ENCODE measurements at regions of chr12 and their contacts with region 1.

Region 1: GRCh38 chr12:10235761-10236631 is 23.3 kb downstream of the GABARAPL1 start:
- DNase-seq: no peak
- H3K4me3 Mint-ChIP-seq: no peak overlapping the region
- H3K27ac Mint-ChIP-seq: no peak overlapping the region
- H3K4me1 Mint-ChIP-seq: peaks cover 11% of the 10 kb centered on the region
- H3K27me3 Mint-ChIP-seq: peaks cover 9% of the 10 kb centered on the region

Region 2: GRCh38 chr12:10364815-10365622 is 129.0 kb after region 1 on chr12:
- intact Hi-C with region 1: loop called (anchors 5 kb)
- DNase-seq: peak; percentile 51
- H3K4me3 Mint-ChIP-seq: no peak overlapping the region
- H3K27ac Mint-ChIP-seq: no peak overlapping the region
- H3K4me1 Mint-ChIP-seq: peaks cover 9% of the 10 kb centered on the region
- H3K27me3 Mint-ChIP-seq: peaks cover 27% of the 10 kb centered on the region

Region 3: DNA sequence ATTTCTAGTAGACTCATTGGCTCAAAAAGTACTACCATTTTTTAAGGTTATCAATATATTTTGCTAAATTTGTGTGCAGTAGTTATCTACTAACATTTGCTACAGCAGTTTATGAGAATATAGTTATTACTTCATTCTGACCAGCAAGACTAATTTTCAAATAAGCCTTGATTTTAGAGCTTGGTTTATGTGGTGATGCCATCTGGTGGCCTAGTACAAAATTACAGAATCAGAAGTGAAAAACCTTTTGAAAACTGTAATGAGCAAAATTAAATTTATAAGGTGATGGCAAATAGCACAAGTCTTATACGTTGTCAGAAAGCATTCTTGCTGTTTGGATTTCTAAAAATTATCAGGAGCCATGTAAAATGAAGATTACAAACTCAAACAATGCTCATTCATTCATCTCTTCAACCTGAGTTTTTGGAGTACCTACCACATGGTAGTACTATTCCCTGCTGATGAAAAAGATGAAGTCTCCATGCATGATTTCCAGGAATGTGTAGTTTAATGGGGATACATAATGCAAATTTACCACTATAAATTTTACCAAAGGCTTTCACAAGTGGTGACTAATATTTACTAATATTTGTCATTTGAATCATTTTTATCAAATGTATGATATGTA is 326.4 kb after region 1 on chr12:
- intact Hi-C with region 1: loop called (anchors 1 kb)
- DNase-seq: no peak
- H3K4me3 Mint-ChIP-seq: no peak overlapping the region
- H3K27ac Mint-ChIP-seq: no peak overlapping the region
- H3K4me1 Mint-ChIP-seq: no peaks in the 10 kb centered on the region
- H3K27me3 Mint-ChIP-seq: peaks cover 39% of the 10 kb centered on the region

Region 4: GRCh38 chr12:10673660-10674384 is 437.8 kb after region 1 on chr12 and contains the start of gene STYK1:
- intact Hi-C with region 1: loop called (anchors 2 kb)
- DNase-seq: peak; percentile 71
- H3K4me3 Mint-ChIP-seq: peak within 1 kb of the TSS; percentile 70
- H3K27ac Mint-ChIP-seq: no peak within 1 kb of the TSS
- H3K4me1 Mint-ChIP-seq: peaks cover 39% of the 10 kb centered on the region
- H3K27me3 Mint-ChIP-seq: peaks cover 67% of the 10 kb centered on the region
- total RNA-seq, gene STYK1: not detected in 2 replicates

Region 5: GRCh38 chr12:10749700-10750384 is 513.8 kb after region 1 on chr12:
- intact Hi-C with region 1: loop called (anchors 1 kb)
- DNase-seq: peak; percentile 60
- H3K4me3 Mint-ChIP-seq: peak overlapping the region; percentile 38
- H3K27ac Mint-ChIP-seq: no peak overlapping the region
- H3K4me1 Mint-ChIP-seq: peaks cover 10% of the 10 kb centered on the region
- H3K27me3 Mint-ChIP-seq: peaks cover 43% of the 10 kb centered on the region